ENCODE measurements at regions of chr5 and their contacts with region 1.

Region 1: GRCh38 chr5:181191529-181192394 is 13.2 kb downstream of the TRIM7 start:
- DNase-seq: peak; percentile 98
- ATAC-seq: peak; percentile 68
- H3K4me3 ChIP-seq: peak overlapping the region; percentile 86 to 98 (median 93)
- H3K4me3 Mint-ChIP-seq: peak overlapping the region; percentile 97
- H3K27ac ChIP-seq: peak overlapping the region; percentile 62 to 82
- H3K27ac Mint-ChIP-seq: peak overlapping the region; percentile 97
- H3K4me1 ChIP-seq: peaks cover 7 to 28% of the 10 kb centered on the region in 2 donors
- H3K4me1 Mint-ChIP-seq: peaks cover 40% of the 10 kb centered on the region
- H3K27me3 ChIP-seq: no peaks in the 10 kb centered on the region
- H3K27me3 Mint-ChIP-seq: peaks cover 10% of the 10 kb centered on the region
- CTCF ChIP-seq: no peak

Region 2: DNA sequence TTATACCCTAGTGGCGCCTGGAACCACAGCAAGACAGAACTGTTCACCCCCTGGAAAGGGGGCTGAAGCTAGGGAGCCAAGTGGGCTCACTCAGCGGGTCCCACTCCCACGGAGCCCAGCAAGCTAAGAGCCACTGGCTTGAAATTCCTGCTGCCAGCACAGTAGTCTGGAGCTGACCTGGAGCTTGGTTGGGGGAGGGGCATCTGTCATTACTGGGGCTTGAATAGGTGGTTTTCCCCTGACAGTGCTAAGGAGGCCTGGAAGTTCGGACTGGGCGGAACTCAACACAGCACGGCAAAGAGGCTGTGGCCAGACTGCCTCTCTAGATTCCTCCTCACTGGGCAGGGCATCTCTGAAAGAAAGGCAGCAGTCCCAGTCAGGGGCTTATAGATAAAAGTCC is 183.6 kb before region 1 on chr5:
- CTCF ChIA-PET with region 1: no interaction called
- POLR2A ChIA-PET with region 1: no interaction called
- intact Hi-C with region 1: no loop called
- DNase-seq: no peak
- ATAC-seq: no peak
- H3K4me3 ChIP-seq: no peak overlapping the region
- H3K4me3 Mint-ChIP-seq: no peak overlapping the region
- H3K27ac ChIP-seq: no peak overlapping the region
- H3K27ac Mint-ChIP-seq: no peak overlapping the region
- H3K4me1 ChIP-seq: no peaks in the 10 kb centered on the region
- H3K4me1 Mint-ChIP-seq: peaks cover 12% of the 10 kb centered on the region
- H3K27me3 ChIP-seq: peaks cover 0 to 8% (median 0%) of the 10 kb centered on the region in 4 experiments
- H3K27me3 Mint-ChIP-seq: peaks cover 4% of the 10 kb centered on the region
- CTCF ChIP-seq: no peak

Region 3: GRCh38 chr5:181063514-181063913 is 128.2 kb before region 1 on chr5:
- CTCF ChIA-PET with region 1: no interaction called
- POLR2A ChIA-PET with region 1: interaction called, 10 read pairs
- intact Hi-C with region 1: no loop called
- DNase-seq: no peak
- ATAC-seq: no peak
- H3K4me3 ChIP-seq: no peak overlapping the region
- H3K4me3 Mint-ChIP-seq: no peak overlapping the region
- H3K27ac ChIP-seq: no peak overlapping the region
- H3K27ac Mint-ChIP-seq: no peak overlapping the region
- H3K4me1 ChIP-seq: peaks cover 0 to 3% of the 10 kb centered on the region in 2 donors
- H3K4me1 Mint-ChIP-seq: peaks cover 8% of the 10 kb centered on the region
- H3K27me3 ChIP-seq: peaks cover 0 to 44% (median 27%) of the 10 kb centered on the region in 4 experiments
- H3K27me3 Mint-ChIP-seq: peaks cover 51% of the 10 kb centered on the region
- CTCF ChIP-seq: no peak

Region 4: GRCh38 chr5:181207214-181208107 is 15.7 kb after region 1 on chr5:
- CTCF ChIA-PET with region 1: interaction called, 105 read pairs
- POLR2A ChIA-PET with region 1: interaction called, 73 read pairs
- intact Hi-C with region 1: loop called (anchors 1 kb)
- DNase-seq: peak; percentile 83
- ATAC-seq: peak; percentile 50
- H3K4me3 ChIP-seq: peak overlapping the region; percentile 54 to 71 (median 68)
- H3K4me3 Mint-ChIP-seq: peak overlapping the region; percentile 98
- H3K27ac ChIP-seq: peak overlapping the region in 1 of 2 donors; percentile 57
- H3K27ac Mint-ChIP-seq: peak overlapping the region; percentile 95
- H3K4me1 ChIP-seq: peaks cover 23 to 35% of the 10 kb centered on the region in 2 donors
- H3K4me1 Mint-ChIP-seq: peaks cover 40% of the 10 kb centered on the region
- H3K27me3 ChIP-seq: peaks cover 0 to 26% (median 12%) of the 10 kb centered on the region in 4 experiments
- H3K27me3 Mint-ChIP-seq: peaks cover 14% of the 10 kb centered on the region
- CTCF ChIP-seq: no peak

Region 5: DNA sequence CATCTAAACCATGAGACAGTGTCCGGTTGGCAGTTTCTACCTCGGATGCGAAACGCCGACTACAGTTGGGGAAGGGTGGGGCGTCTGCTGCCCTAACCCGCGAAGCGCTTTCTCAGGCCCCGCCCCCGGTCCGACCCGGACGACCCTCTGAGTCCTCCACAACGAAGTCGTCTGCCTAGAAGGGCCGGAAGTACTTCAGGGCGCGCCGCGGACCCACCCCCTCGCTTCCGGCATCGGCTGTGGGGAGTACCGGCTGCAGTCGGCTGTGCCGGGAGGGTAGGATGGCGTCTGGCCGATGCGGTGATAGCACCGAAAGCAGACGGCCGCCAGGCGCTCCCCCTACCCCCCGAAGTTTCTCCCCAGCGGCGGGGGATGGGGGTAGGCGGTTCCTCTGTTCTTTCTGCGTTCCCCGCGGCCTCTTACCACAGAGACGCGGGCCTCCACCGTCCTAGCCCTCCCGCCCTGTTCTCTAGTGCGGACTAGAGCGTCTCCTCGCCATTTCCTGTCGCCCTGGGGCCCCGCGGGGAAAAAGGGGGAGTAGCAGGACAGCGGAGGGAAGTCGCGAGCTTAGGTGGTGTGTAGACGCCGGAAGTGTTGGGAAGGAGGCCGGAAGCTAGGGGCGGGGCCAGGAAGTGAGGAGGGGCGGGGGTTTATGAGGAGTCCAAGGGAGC is 31.4 kb after region 1 on chr5 and contains the start of gene TRIM41:
- CTCF ChIA-PET with region 1: interaction called, 48 read pairs
- POLR2A ChIA-PET with region 1: interaction called, 74 read pairs
- intact Hi-C with region 1: loop called (anchors 1 kb)
- DNase-seq: peak; percentile 99
- ATAC-seq: peak; percentile 68
- H3K4me3 ChIP-seq: peak within 1 kb of the TSS; percentile 68 to 95 (median 89)
- H3K4me3 Mint-ChIP-seq: peak within 1 kb of the TSS; percentile 94
- H3K27ac ChIP-seq: peak within 1 kb of the TSS; percentile 95
- H3K27ac Mint-ChIP-seq: peak within 1 kb of the TSS; percentile 98
- H3K4me1 ChIP-seq: peaks cover 18 to 41% of the 10 kb centered on the region in 2 donors
- H3K4me1 Mint-ChIP-seq: peaks cover 54% of the 10 kb centered on the region
- H3K27me3 ChIP-seq: no peaks in the 10 kb centered on the region
- H3K27me3 Mint-ChIP-seq: no peaks in the 10 kb centered on the region
- CTCF ChIP-seq: no peak
- total RNA-seq, gene TRIM41: 44.3 and 45.2 TPM in 2 replicates

Region 6: GRCh38 chr5:181260387-181261319 is 68.9 kb after region 1 on chr5 and contains the start of gene TRIM52:
- CTCF ChIA-PET with region 1: interaction called, 9 read pairs
- POLR2A ChIA-PET with region 1: interaction called, 19 read pairs
- intact Hi-C with region 1: loop called (anchors 1 kb)
- DNase-seq: peak; percentile 94
- ATAC-seq: peak; percentile 79
- H3K4me3 ChIP-seq: peak within 1 kb of the TSS; percentile 67 to 99 (median 98)
- H3K4me3 Mint-ChIP-seq: peak within 1 kb of the TSS; percentile 95
- H3K27ac ChIP-seq: peak within 1 kb of the TSS; percentile 98
- H3K27ac Mint-ChIP-seq: peak within 1 kb of the TSS; percentile 97
- H3K4me1 ChIP-seq: peaks cover 22 to 38% of the 10 kb centered on the region in 2 donors
- H3K4me1 Mint-ChIP-seq: peaks cover 53% of the 10 kb centered on the region
- H3K27me3 ChIP-seq: no peaks in the 10 kb centered on the region
- H3K27me3 Mint-ChIP-seq: no peaks in the 10 kb centered on the region
- CTCF ChIP-seq: peak; percentile 17
- total RNA-seq, gene TRIM52: 58.6 and 61.3 TPM in 2 replicates